ENCODE measurements at regions of chr12 and their contacts with region 1.

Region 1: DNA sequence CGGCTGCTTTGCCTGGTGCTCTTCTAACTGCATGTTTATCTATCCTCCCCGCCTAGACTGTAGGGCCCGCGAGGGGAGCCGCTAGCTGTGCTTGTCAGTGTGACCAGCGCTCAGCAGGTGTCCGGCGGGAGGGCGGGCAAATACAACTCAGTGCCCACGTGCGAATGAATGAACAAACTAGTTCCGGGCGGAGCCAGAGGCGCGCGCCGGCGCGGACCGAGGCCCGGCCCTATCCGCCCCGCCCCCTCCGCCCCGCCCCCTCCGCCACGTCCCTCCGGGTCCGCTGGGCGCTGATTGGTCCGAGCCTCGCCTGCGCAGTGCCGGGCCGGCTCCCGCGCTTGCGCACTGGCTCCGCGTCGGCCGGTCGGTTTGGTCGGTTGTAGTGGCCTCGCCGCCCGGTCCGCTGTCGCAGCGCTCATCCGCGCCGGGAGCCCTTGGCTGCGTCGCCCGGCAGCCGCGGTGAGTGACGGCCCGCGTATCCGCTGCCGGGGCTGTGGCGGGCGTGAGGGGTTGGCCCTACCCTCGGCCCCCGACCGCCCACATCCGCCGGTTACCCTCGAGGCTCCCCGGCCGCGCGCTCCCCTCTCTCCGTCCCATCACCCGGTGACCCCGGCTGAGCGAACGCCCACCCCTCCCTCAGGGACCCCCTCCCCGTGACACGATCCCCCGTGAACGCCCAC is 60.0 kb downstream of the DDX51 start:
- DNase-seq: peak; percentile 85 to 87 (median 87)
- H3K4me3 ChIP-seq: peak overlapping the region; percentile 42 to 66
- H3K4me3 Mint-ChIP-seq: peak overlapping the region; percentile 82 to 94 (median 91)
- H3K27ac ChIP-seq: peak overlapping the region; percentile 71
- H3K27ac Mint-ChIP-seq: peak overlapping the region; percentile 79 to 94 (median 91)
- H3K4me1 ChIP-seq: peaks cover 19% of the 10 kb centered on the region
- H3K4me1 Mint-ChIP-seq: peaks cover 22 to 33% (median 28%) of the 10 kb centered on the region in 4 donors
- H3K27me3 ChIP-seq: no peaks in the 10 kb centered on the region
- H3K27me3 Mint-ChIP-seq: no peaks in the 10 kb centered on the region

Region 2: DNA sequence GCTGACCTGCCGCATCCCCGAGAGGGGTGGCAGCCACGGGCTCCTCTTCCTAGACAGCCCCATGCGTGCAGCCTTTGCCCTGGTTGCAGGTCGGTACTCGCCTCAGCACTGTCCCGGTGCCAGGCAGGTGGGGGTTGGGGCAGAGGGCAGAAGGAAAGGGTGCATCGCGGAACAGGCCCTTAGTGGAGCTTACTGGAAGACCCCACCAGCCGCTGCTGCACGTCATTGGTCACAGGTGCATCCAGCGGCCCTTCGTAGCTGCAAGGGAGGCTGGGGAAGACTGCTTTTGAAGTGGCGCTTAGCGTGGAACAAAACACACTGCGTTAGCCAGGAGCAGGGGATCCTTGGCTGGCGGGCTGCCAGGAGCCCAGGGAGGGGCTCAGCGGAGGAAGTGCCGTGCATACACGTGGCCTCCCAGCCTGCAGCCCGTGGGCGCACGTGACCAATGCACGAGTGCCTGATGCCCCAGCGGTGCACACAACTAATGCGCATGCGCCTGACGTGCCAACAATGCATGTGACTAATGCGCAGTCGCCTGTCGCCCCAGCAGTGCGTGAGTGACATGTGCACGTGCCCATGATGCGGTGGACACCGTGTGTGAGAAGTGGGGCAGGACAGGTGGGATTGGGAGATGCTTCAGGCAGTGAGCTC is 139.4 kb before region 1 on chr12:
- CTCF ChIA-PET with region 1: no interaction called
- POLR2A ChIA-PET with region 1: no interaction called
- intact Hi-C with region 1: no loop called
- DNase-seq: no peak
- H3K4me3 ChIP-seq: no peak overlapping the region
- H3K4me3 Mint-ChIP-seq: peak overlapping the region in 2 of 8 donors; percentile 54 to 61
- H3K27ac ChIP-seq: no peak overlapping the region
- H3K27ac Mint-ChIP-seq: peak overlapping the region in 2 of 7 donors; percentile 42 to 54
- H3K4me1 ChIP-seq: peaks cover 21% of the 10 kb centered on the region
- H3K4me1 Mint-ChIP-seq: peaks cover 10 to 25% (median 18%) of the 10 kb centered on the region in 4 donors
- H3K27me3 ChIP-seq: no peaks in the 10 kb centered on the region
- H3K27me3 Mint-ChIP-seq: no peaks in the 10 kb centered on the region

Region 3: DNA sequence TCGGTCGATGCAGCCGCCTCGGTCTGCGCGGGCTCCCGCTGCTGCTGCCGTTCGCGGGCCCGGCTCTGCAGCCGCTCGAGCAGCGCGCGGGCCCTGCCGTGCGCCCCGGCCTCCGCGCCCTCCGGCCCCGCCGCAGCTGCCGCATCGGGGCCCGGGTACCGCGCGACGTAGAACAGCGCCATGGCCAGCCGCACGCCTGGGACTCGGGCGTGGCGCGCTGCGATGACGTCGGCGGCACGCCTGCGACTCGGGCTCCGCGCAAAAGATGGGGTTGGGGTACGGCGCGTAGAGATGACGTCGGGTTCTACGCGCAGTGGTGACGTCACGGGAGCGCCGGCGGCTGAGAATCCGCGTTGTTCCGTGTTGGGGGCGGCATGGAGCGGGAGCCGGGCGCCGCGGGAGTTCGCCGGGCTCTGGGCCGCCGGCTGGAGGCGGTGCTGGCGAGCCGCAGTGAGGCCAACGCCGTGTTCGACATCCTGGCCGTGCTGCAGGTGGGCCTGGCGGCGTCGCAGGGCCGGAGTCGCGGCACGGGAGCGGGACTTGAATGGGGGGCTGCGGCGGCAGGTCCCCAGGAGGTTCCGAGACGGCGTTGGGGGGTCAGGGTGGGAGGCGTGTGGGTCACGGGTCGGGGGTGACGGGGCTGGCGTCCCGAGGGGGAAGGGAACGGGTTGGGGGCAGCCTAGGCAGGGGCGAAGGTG is 60.2 kb after region 1 on chr12 and contains the starts of genes DDX51 and NOC4L:
- CTCF ChIA-PET with region 1: no interaction called
- POLR2A ChIA-PET with region 1: interaction called, 3 read pairs
- intact Hi-C with region 1: loop called (anchors 2 kb)
- DNase-seq: peak; percentile 92 to 97 (median 95)
- H3K4me3 ChIP-seq: peak within 1 kb of the TSS; percentile 58 to 81
- H3K4me3 Mint-ChIP-seq: peak within 1 kb of the TSS; percentile 89 to 99 (median 90)
- H3K27ac ChIP-seq: peak within 1 kb of the TSS; percentile 82
- H3K27ac Mint-ChIP-seq: peak within 1 kb of the TSS; percentile 94 to 99 (median 97)
- H3K4me1 ChIP-seq: peaks cover 27% of the 10 kb centered on the region
- H3K4me1 Mint-ChIP-seq: peaks cover 15 to 42% (median 27%) of the 10 kb centered on the region in 4 donors
- H3K27me3 ChIP-seq: no peaks in the 10 kb centered on the region
- H3K27me3 Mint-ChIP-seq: peaks cover 0 to 2% of the 10 kb centered on the region in 2 donors
- total RNA-seq, gene DDX51: 42.1 to 42.9 TPM
- total RNA-seq, gene NOC4L: 17.0 to 18.5 TPM